WTC11 (cell line): ENCODE measurements at regions of chr3 and their contacts with region 1.

Region 1: DNA sequence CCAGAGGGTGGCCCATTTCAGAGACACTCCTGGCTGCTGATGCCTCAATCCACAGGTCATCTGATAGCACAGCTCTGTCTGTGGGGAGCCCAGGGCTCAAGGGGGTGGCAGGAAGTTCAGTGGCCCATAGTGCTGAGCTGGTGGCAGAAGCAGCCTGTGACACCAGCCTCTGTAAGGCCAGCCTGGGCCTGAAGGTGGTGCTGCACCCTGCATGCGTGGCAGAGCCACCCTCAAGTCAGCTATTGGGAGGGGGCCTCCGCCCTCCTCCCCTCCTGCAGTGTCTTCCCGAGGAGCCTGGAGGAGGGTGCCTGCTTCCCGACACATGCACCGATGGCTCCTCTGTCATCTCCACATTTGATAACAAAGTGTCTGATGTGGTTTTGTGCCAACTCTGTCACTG is 3.0 kb downstream of the PLA1A start:
- DNase-seq: peak; percentile 71
- ATAC-seq: peak; percentile 99
- H3K4me3 Mint-ChIP-seq: no peak overlapping the region
- H3K27ac Mint-ChIP-seq: no peak overlapping the region
- H3K4me1 Mint-ChIP-seq: peaks cover 12% of the 10 kb centered on the region
- H3K27me3 Mint-ChIP-seq: no peaks in the 10 kb centered on the region; the same call in none of the 2 replicates
- CTCF ChIP-seq: peak; percentile 43; the same call in 1 of the 2 replicates

Region 2: GRCh38 chr3:119470866-119471265 is 129.9 kb before region 1 on chr3:
- CTCF ChIA-PET with region 1: no interaction called
- POLR2A ChIA-PET with region 1: no interaction called
- DNase-seq: no peak
- ATAC-seq: no peak
- H3K4me3 Mint-ChIP-seq: no peak overlapping the region; the same call in 1 of the 2 replicates
- H3K27ac Mint-ChIP-seq: no peak overlapping the region
- H3K4me1 Mint-ChIP-seq: peaks cover 20% of the 10 kb centered on the region
- H3K27me3 Mint-ChIP-seq: no peaks in the 10 kb centered on the region
- CTCF ChIP-seq: no peak

Region 3: GRCh38 chr3:119579366-119580165 is 21.2 kb before region 1 on chr3 and contains the start of gene ADPRH:
- CTCF ChIA-PET with region 1: interaction called, 12 read pairs
- POLR2A ChIA-PET with region 1: no interaction called
- DNase-seq: peak; percentile 78
- ATAC-seq: peak; percentile 90
- H3K4me3 Mint-ChIP-seq: peak within 1 kb of the TSS; percentile 92
- H3K27ac Mint-ChIP-seq: peak within 1 kb of the TSS; percentile 69
- H3K4me1 Mint-ChIP-seq: peaks cover 13% of the 10 kb centered on the region
- H3K27me3 Mint-ChIP-seq: peaks cover 32% of the 10 kb centered on the region
- CTCF ChIP-seq: no peak
- total RNA-seq, gene ADPRH: 3.6 to 4.3 TPM (median 4.1 TPM) in 3 replicates

Region 4: GRCh38 chr3:119998166-119998565 is 397.4 kb after region 1 on chr3:
- CTCF ChIA-PET with region 1: no interaction called
- POLR2A ChIA-PET with region 1: no interaction called
- DNase-seq: no peak
- ATAC-seq: no peak
- H3K4me3 Mint-ChIP-seq: no peak overlapping the region
- H3K27ac Mint-ChIP-seq: no peak overlapping the region
- H3K4me1 Mint-ChIP-seq: peaks cover 6% of the 10 kb centered on the region; the same call in 1 of the 2 replicates
- H3K27me3 Mint-ChIP-seq: no peaks in the 10 kb centered on the region
- CTCF ChIP-seq: no peak